Prostate gland (tissue), 2 donors: ENCODE measurements at regions of chr17 and their contacts with region 1.

Region 1: DNA sequence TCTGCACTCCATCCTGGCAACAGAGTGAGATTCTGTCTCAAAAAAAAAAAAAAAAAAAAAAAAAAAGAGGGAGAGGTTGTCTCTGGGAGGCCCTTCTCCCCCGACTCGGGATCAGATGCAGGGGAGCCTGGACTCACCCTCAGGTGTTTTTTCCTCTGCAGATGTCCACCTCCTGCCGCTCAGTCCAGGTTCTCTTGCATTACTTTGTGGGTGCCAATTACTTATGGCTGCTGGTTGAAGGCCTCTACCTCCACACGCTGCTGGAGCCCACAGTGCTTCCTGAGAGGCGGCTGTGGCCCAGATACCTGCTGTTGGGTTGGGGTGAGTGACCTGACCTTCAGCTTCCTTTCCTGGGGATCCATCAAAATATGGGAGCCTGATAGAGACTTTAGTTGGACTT is 34.1 kb downstream of the GLP2R start:
- DNase-seq: no peak
- H3K4me3 ChIP-seq: no peak overlapping the region
- H3K27ac ChIP-seq: no peak overlapping the region
- H3K4me1 ChIP-seq: no peaks in the 10 kb centered on the region
- H3K27me3 ChIP-seq: no peaks in the 10 kb centered on the region
- CTCF ChIP-seq: no peak
- POLR2A ChIP-seq: no peak

Region 2: DNA sequence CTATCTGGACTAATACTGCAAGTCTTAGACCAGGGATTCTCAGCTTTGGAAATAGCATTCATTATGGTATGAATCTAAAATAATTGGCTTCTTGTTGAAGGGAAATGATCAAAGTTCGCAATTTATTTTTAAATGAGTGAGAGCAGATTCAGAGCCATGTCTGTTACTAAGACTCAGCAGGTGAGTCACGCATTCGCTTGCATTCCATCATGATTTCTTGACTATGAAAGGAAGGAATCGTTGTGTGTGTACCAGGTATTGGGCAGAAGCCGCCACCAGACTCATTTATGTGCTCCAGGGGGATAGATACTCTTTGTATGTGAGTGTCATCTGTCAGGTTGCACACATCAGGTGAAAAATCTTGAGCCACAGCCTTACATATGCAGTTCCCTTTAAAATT is 48.7 kb before region 1 on chr17:
- intact Hi-C with region 1: loop called (anchors 5 kb)
- DNase-seq: no peak
- H3K4me3 ChIP-seq: no peak overlapping the region
- H3K27ac ChIP-seq: no peak overlapping the region
- H3K4me1 ChIP-seq: no peaks in the 10 kb centered on the region
- H3K27me3 ChIP-seq: no peaks in the 10 kb centered on the region
- CTCF ChIP-seq: no peak
- POLR2A ChIP-seq: no peak

Region 3: GRCh38 chr17:9824094-9824493 is 35.7 kb before region 1 on chr17:
- intact Hi-C with region 1: no loop called
- DNase-seq: no peak
- H3K4me3 ChIP-seq: no peak overlapping the region
- H3K27ac ChIP-seq: no peak overlapping the region
- H3K4me1 ChIP-seq: no peaks in the 10 kb centered on the region
- H3K27me3 ChIP-seq: no peaks in the 10 kb centered on the region
- CTCF ChIP-seq: no peak
- POLR2A ChIP-seq: no peak